Mammary epithelial cell (primary cell): ENCODE measurements at regions of chr19 and their contacts with region 1.

Region 1: GRCh38 chr19:5480427-5480836 is 25.2 kb downstream of the ZNRF4 start:
- DNase-seq: no peak
- H3K4me3 ChIP-seq: no peak overlapping the region
- H3K27ac ChIP-seq: no peak overlapping the region
- H3K4me1 ChIP-seq: no peaks in the 10 kb centered on the region
- H3K27me3 ChIP-seq: peaks cover 13% of the 10 kb centered on the region
- CTCF ChIP-seq: peak; percentile 43 to 54

Region 2: DNA sequence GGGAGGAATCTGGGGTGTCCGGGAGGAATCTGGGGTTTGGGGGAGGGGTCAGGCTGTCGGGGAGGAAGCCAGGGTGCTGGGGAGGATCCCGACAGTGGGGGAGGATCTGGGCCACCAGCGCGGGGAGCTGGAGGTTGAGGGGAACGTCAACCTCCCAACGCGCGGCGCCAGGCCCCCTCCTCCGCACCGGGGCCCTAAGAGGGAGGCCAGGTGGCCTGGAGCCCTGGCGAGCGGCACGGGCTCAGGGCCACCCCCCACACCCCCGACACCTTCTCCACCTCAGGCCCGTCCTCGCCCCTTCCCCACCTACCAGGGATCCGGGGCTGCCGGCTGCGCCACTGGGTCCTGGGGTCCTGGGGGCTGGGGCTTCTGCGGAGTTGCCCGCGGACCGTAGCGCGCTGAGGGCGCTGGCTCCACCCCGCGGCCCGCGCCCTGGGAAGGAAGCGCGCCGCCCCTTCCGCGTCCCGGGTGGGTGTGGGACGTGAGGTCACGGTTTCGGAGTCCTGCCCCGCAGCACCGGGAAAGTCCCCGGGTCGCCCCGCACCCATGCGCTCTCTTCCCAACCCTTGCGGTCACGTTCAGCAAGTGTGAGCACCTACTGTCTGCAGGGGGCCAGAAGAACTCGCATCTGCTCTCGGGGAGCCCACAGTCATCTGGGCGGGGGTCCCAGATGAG is 649.0 kb before region 1 on chr19 and contains the start of gene TICAM1:
- CTCF ChIA-PET with region 1: no interaction called
- dilution Hi-C with region 1: no loop called
- in situ Hi-C with region 1: no loop called
- intact Hi-C with region 1: no loop called
- DNase-seq: peak; percentile 91
- H3K4me3 ChIP-seq: peak within 1 kb of the TSS; percentile 68 to 99 (median 90)
- H3K27ac ChIP-seq: peak within 1 kb of the TSS; percentile 81
- H3K4me1 ChIP-seq: peaks cover 7% of the 10 kb centered on the region
- H3K27me3 ChIP-seq: no peaks in the 10 kb centered on the region
- CTCF ChIP-seq: peak in 1 of 2 donors; percentile 22
- total RNA-seq, gene TICAM1: 4.0 to 33.3 TPM

Region 3: GRCh38 chr19:5057861-5058260 is 422.6 kb before region 1 on chr19:
- CTCF ChIA-PET with region 1: no interaction called
- dilution Hi-C with region 1: loop called (anchors 10 kb)
- in situ Hi-C with region 1: no loop called
- intact Hi-C with region 1: no loop called
- DNase-seq: peak; percentile 12
- H3K4me3 ChIP-seq: no peak overlapping the region
- H3K27ac ChIP-seq: no peak overlapping the region
- H3K4me1 ChIP-seq: peaks cover 12% of the 10 kb centered on the region
- H3K27me3 ChIP-seq: no peaks in the 10 kb centered on the region
- CTCF ChIP-seq: no peak

Region 4: DNA sequence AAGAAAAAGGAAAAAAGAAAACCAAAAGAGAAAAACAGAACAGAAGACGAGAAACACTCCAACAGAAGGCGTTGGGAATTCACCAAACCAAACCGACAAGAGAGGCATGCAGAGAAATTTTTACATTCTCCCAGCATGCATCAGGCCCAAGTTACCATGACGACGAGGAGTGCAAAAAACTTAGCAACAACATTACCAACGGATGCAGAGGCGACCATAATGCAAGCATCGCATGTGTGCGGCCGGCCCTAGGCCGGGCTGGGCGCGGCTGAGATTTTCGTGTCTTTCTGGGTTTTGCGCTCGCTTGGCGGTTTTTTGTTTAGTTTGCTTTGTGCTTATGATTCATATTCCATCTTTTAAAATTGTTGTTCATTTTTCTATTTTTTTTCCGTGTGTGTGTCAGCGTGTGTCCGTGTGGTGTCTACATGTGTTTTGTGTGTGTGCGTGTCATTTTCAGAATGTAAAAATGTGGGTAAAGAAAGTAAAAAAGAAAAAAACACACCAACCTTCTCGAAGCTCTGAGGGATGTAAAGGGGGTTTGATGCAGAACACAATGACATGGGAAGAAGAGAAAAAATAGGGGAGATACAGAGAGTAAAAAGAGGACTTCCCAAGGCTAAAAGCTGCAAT is 224.7 kb before region 1 on chr19:
- CTCF ChIA-PET with region 1: no interaction called
- dilution Hi-C with region 1: loop called (anchors 5 kb)
- in situ Hi-C with region 1: no loop called
- intact Hi-C with region 1: no loop called
- DNase-seq: no peak
- H3K4me3 ChIP-seq: no peak overlapping the region
- H3K27ac ChIP-seq: no peak overlapping the region
- H3K4me1 ChIP-seq: peaks cover 5% of the 10 kb centered on the region
- H3K27me3 ChIP-seq: peaks cover 2% of the 10 kb centered on the region
- CTCF ChIP-seq: no peak

Region 5: DNA sequence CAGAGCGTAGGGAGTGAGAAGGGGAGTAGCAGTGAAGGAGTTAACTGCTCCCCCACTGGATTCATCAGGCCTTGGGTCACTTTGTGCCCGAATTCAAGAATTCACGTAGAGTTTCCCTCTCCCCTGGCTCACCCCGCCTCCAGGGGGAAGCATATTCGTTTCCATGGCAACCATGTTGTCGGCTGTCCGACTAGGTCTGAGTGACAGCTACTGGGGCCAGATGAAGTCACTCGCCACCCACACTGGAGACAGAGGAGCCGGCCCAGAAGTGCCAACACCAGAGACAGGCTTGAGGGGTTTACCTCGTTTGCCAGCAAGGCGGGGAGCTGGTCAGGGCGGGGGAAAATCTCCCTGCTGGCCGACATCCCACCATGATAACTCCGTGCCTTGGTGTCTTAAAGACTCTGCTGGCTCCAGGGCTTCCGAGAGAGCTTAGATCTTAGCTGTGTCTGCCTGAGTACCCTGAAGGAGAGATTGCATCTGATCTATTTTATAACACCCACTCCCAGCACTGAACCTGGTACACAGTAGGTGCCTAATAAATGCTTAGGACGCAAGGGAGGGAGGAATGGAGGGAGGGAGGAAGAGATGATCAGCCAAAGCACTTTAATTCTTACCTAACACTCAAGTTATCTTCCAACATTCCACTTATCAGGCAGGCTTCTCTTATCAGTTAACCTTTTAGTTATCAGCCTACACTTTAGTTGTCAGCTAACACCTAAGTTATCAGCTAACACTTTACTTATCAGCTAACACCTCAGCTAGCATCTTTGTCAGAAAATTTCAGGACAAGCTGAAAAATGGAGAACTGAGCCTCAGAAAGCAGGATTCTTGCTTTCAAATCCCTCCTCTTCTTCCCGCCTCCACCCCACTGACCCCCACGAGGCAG is 82.4 kb before region 1 on chr19:
- CTCF ChIA-PET with region 1: no interaction called
- dilution Hi-C with region 1: loop called (anchors 5 kb)
- in situ Hi-C with region 1: no loop called
- intact Hi-C with region 1: no loop called
- DNase-seq: no peak
- H3K4me3 ChIP-seq: no peak overlapping the region
- H3K27ac ChIP-seq: no peak overlapping the region
- H3K4me1 ChIP-seq: no peaks in the 10 kb centered on the region
- H3K27me3 ChIP-seq: no peaks in the 10 kb centered on the region
- CTCF ChIP-seq: no peak

Region 6: DNA sequence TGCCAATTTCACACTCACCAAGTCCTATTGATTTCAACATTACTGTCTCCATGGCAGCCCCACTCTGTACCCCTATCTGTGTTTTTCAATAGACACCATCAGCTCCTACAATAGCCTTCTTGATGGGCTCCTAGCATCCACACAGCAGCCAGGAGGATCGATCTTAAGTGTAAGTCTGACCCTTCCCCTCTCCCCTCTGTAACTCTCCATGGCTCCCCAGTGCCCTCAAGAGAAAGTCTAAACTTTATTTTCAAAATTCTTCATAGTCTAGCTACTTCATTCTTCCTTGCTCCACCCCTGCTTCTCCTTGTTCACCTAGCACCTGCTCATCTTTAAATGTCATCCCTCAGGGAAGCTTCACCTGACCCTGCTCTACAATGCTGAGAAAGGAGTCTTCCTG is 55.2 kb before region 1 on chr19:
- CTCF ChIA-PET with region 1: no interaction called
- dilution Hi-C with region 1: loop called (anchors 5 kb)
- in situ Hi-C with region 1: no loop called
- intact Hi-C with region 1: no loop called
- DNase-seq: no peak
- H3K4me3 ChIP-seq: no peak overlapping the region
- H3K27ac ChIP-seq: no peak overlapping the region
- H3K4me1 ChIP-seq: no peaks in the 10 kb centered on the region
- H3K27me3 ChIP-seq: peaks cover 5% of the 10 kb centered on the region
- CTCF ChIP-seq: no peak

Region 7: DNA sequence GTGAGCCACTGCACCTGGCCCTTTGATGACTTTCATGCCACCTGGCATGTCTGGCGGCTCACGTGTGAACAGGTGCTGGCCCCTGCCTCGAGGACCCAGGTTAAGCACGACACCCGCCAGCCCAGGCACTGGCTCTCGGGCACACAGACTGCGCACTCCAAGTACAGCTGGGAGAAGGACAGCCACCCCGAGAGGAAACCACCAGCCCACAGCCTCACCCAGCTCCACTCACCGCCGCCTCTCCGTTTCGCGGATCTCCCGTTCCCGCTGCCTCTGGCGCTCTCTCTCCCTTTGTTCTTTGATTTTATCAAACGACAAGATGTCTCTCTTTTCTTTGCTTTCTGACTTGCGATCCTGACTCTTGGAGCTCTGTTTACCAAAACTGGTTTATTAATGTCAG is 114.7 kb after region 1 on chr19:
- CTCF ChIA-PET with region 1: no interaction called
- dilution Hi-C with region 1: loop called (anchors 5 kb)
- in situ Hi-C with region 1: no loop called
- intact Hi-C with region 1: no loop called
- DNase-seq: no peak
- H3K4me3 ChIP-seq: no peak overlapping the region
- H3K27ac ChIP-seq: no peak overlapping the region
- H3K4me1 ChIP-seq: no peaks in the 10 kb centered on the region
- H3K27me3 ChIP-seq: no peaks in the 10 kb centered on the region
- CTCF ChIP-seq: no peak